PC-3 (cell line): ENCODE measurements at regions of chr10 and their contacts with region 1.

Region 1: GRCh38 chr10:36725581-36726520 is 399.5 kb upstream of the ANKRD30A start:
- DNase-seq: peak; percentile 100
- ATAC-seq: peak; percentile 91
- H3K4me3 ChIP-seq: peak overlapping the region; percentile 49
- H3K27ac ChIP-seq: peak overlapping the region; percentile 86
- H3K4me1 ChIP-seq: peaks cover 43% of the 10 kb centered on the region
- H3K27me3 ChIP-seq: no peaks in the 10 kb centered on the region
- CTCF ChIP-seq: peak; percentile 100

Region 2: DNA sequence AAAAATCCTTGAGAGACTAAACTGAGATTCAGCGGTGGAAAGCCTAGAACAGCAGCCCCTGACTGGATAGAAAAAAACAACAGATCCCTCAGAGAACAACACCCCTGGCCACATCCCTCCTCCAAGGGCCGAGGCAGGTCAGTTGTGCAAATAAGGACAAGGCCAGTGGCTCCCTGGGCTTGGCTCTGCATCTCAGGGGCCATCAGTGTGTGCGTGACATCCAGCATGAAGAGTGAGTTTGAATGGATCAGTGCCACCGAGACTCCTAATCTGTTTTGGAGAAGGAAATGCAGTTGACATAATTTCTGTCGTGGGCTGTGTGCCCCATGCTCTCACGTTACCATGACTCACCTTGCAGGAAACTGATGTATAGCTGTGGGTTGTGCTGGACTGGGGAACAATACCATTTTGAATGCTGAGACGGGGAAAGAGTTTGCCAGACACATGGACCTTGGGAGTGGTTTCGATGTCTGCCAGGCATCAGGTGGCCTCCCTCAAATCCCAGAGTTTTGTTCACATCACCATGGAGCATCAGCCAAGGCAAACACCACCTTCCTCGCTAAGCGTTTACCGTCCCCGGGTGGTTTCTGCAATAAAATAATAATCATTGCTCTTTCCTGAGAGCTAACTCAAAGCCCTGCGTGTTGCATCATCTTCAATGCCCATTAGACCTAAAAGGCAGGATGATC is 930.6 kb before region 1 on chr10:
- CTCF ChIA-PET with region 1: interaction called, 7 read pairs
- POLR2A ChIA-PET with region 1: no interaction called
- intact Hi-C with region 1: loop called (anchors 1 kb)
- DNase-seq: peak; percentile 100
- ATAC-seq: peak; percentile 94
- H3K4me3 ChIP-seq: peak overlapping the region; percentile 12
- H3K27ac ChIP-seq: peak overlapping the region; percentile 80
- H3K4me1 ChIP-seq: peaks cover 46% of the 10 kb centered on the region
- H3K27me3 ChIP-seq: no peaks in the 10 kb centered on the region
- CTCF ChIP-seq: no peak

Region 3: DNA sequence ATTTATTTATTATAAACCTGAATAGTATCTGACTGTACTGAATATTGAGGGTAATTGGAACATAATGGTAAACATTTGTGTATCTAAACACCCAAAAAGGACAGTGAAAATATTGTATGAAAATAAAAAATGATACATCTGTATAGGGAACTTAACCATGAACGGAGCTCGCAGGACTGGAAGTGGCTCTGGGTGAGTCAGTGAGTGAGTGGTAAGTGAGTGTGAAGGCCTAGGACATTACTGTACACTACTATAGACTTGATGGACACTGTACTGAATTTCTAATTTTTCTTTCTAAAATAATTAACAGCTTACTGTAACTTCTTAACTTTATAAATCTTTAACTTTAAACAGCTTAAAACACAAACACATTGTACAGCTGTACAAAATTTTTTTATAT is 629.3 kb before region 1 on chr10:
- CTCF ChIA-PET with region 1: interaction called, 12 read pairs
- POLR2A ChIA-PET with region 1: interaction called, 4 read pairs
- intact Hi-C with region 1: loop called (anchors 1 kb)
- DNase-seq: peak; percentile 97
- ATAC-seq: peak; percentile 71
- H3K4me3 ChIP-seq: no peak overlapping the region
- H3K27ac ChIP-seq: peak overlapping the region; percentile 58
- H3K4me1 ChIP-seq: peaks cover 29% of the 10 kb centered on the region
- H3K27me3 ChIP-seq: no peaks in the 10 kb centered on the region
- CTCF ChIP-seq: no peak

Region 4: GRCh38 chr10:36462194-36462593 is 263.7 kb before region 1 on chr10:
- CTCF ChIA-PET with region 1: no interaction called
- POLR2A ChIA-PET with region 1: no interaction called
- intact Hi-C with region 1: loop called (anchors 1 kb)
- DNase-seq: peak; percentile 95
- ATAC-seq: no peak
- H3K4me3 ChIP-seq: no peak overlapping the region
- H3K27ac ChIP-seq: no peak overlapping the region
- H3K4me1 ChIP-seq: peaks cover 40% of the 10 kb centered on the region
- H3K27me3 ChIP-seq: no peaks in the 10 kb centered on the region
- CTCF ChIP-seq: no peak

Region 5: GRCh38 chr10:36564433-36564832 is 161.4 kb before region 1 on chr10:
- CTCF ChIA-PET with region 1: no interaction called
- POLR2A ChIA-PET with region 1: no interaction called
- intact Hi-C with region 1: no loop called
- DNase-seq: no peak
- ATAC-seq: no peak
- H3K4me3 ChIP-seq: no peak overlapping the region
- H3K27ac ChIP-seq: no peak overlapping the region
- H3K4me1 ChIP-seq: no peaks in the 10 kb centered on the region
- H3K27me3 ChIP-seq: no peaks in the 10 kb centered on the region
- CTCF ChIP-seq: no peak

Region 6: GRCh38 chr10:36634916-36635315 is 90.9 kb before region 1 on chr10:
- CTCF ChIA-PET with region 1: interaction called, 13 read pairs
- POLR2A ChIA-PET with region 1: no interaction called
- intact Hi-C with region 1: loop called (anchors 1 kb)
- DNase-seq: peak; percentile 82
- ATAC-seq: peak; percentile 45
- H3K4me3 ChIP-seq: no peak overlapping the region
- H3K27ac ChIP-seq: peak overlapping the region; percentile 52
- H3K4me1 ChIP-seq: peaks cover 36% of the 10 kb centered on the region
- H3K27me3 ChIP-seq: no peaks in the 10 kb centered on the region
- CTCF ChIP-seq: no peak

Region 7: DNA sequence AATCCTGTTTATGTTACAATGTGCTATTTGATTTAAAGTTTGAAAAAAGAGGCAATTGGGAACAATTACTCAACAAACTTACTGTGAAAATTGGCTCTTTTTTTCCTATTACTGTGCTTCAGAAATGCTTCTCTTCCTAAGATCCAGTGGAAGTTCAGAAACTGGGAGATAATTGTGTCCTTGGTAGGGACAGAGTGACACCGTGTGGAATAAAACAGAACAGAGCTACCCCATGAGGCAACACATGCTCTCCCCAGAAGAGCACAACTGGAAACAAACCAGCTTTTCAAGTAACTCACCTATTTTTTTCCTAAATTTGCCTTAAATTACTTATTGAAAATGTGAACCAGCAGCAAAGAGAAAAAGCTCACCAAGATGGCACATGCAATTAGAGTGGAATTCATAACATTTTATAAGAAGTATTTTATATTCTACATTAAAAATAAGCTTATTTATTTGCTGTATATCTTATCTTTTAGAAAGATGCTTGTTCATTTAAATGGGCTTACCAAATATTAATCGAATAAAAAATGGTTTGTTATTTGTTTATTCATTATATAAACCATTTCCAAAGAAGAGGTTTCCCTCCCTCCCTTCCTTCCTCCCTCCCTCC is 53.5 kb after region 1 on chr10:
- CTCF ChIA-PET with region 1: interaction called, 98 read pairs
- POLR2A ChIA-PET with region 1: interaction called, 5 read pairs
- intact Hi-C with region 1: loop called (anchors 1 kb)
- DNase-seq: peak; percentile 100
- ATAC-seq: peak; percentile 98
- H3K4me3 ChIP-seq: no peak overlapping the region
- H3K27ac ChIP-seq: peak overlapping the region; percentile 13
- H3K4me1 ChIP-seq: peaks cover 25% of the 10 kb centered on the region
- H3K27me3 ChIP-seq: no peaks in the 10 kb centered on the region
- CTCF ChIP-seq: peak; percentile 100